T-cell (primary cell): ENCODE measurements at regions of chr2 and their contacts with region 1.

Region 1: GRCh38 chr2:170063456-170064235 is 114.3 kb upstream of the MYO3B start:
- DNase-seq: no peak
- ATAC-seq: no peak
- H3K4me3 ChIP-seq: no peak overlapping the region
- H3K4me3 Mint-ChIP-seq: no peak overlapping the region
- H3K27ac ChIP-seq: no peak overlapping the region
- H3K27ac Mint-ChIP-seq: no peak overlapping the region
- H3K4me1 ChIP-seq: no peaks in the 10 kb centered on the region
- H3K4me1 Mint-ChIP-seq: no peaks in the 10 kb centered on the region
- H3K27me3 ChIP-seq: no peaks in the 10 kb centered on the region
- H3K27me3 Mint-ChIP-seq: no peaks in the 10 kb centered on the region

Region 2: GRCh38 chr2:170052151-170052550 is 11.5 kb before region 1 on chr2:
- CTCF ChIA-PET with region 1: no interaction called
- POLR2A ChIA-PET with region 1: interaction called in 1 of 2 experiments, 10 read pairs
- DNase-seq: no peak
- ATAC-seq: no peak
- H3K4me3 ChIP-seq: no peak overlapping the region
- H3K4me3 Mint-ChIP-seq: no peak overlapping the region
- H3K27ac ChIP-seq: no peak overlapping the region
- H3K27ac Mint-ChIP-seq: no peak overlapping the region
- H3K4me1 ChIP-seq: no peaks in the 10 kb centered on the region
- H3K4me1 Mint-ChIP-seq: no peaks in the 10 kb centered on the region
- H3K27me3 ChIP-seq: no peaks in the 10 kb centered on the region
- H3K27me3 Mint-ChIP-seq: no peaks in the 10 kb centered on the region